ENCODE measurements at regions of chr22 and their contacts with region 1.

Region 1: DNA sequence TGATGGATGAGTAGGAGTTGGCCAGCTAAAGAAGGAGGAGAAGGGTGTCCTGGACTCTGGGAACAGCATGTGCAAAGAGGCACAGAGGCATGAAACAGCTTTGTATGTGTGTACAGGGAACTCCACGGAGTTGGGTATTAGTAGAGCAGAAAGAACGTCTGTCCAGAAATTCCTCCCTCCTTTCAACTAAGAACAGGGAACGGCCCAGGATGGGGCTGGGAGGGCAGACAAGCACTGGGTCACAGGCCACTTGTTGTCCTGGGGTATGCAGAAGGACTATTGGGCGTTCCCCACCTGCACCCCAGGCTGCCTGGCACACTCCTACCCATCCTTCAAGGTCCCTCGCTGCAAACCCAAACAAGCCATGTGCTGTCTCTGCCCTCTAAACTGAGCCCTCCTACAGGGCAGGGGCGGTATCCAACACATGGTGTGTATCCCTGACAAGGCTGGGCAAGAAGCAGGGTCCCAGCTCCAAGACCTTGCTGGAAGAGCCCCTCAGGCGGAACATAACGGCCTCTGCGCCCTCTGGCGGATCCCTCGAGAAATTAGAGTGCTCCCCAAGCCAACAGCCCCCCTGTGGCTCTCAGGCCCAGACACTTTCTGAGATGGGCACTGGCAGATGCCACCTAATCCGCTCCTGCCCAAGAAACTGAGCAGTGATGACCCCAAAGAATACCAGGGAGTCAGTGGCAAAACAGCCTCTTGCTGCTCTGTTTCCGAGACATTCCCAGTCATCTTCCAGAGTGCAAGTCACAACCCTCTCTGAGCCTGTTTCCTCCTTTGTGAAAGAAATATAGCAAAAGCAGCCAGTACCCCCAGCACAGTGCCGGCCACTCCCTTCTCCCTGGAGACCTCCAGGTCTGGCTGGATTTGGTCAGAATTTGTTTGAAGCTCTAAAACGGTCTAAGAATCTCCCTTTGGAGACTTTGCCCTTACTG is 1.6 kb upstream of the ELFN2 start:
- DNase-seq: peak; percentile 56 to 83
- H3K4me3 ChIP-seq: no peak overlapping the region
- H3K27ac ChIP-seq: no peak overlapping the region
- H3K4me1 ChIP-seq: peaks cover 0 to 24% (median 16%) of the 10 kb centered on the region in 4 experiments; a peak in 6 of 7 replicates
- H3K27me3 ChIP-seq: peaks cover 29 to 43% (median 38%) of the 10 kb centered on the region in 4 experiments
- CTCF ChIP-seq: peak; percentile 73 to 92 (median 90)
- EP300 ChIP-seq: no peak
- POLR2A ChIP-seq: no peak
- RAD21 ChIP-seq: peak; percentile 80 to 84

Region 2: DNA sequence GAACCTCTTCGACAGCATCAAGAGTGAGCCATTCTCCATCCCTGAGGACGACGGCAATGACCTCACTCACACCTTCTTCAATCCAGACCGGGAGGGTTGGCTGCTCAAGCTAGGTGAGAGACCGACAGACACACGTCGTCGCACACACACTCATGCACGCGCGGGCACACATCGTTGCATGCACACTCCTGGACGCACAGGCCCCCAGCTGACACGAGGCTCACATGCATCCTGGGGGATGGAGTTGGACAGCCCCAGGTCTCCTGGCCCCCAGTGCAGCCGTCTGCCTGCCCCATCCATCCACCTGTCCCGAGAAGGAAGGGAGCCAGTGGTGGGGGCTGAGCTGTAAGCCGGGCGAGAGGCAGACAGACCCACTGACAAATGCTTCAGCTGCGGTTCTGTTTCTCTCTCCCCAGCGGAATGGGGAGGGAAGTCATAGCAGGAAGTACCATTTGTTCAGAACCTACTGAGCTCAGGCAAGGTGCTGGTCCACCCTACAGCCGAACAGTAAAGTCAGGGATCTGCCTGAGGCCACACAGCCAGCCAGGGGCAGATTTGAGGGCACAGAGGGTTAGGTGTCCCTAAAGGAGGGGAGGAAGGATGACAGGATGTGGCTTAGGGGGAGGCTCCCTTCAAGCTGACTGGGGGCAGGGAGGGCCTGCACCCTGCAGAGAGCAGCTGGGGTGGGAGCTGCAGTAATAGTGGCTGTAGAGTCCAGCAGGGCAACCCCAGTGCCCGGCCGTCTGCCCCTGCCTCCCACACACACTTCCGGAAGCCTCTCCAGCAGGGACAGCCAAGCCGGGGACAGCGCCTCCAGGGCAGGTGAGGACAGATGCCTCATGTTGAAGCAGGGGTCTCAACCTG is 119.5 kb before region 1 on chr22:
- CTCF ChIA-PET with region 1: interaction called, 116 read pairs
- POLR2A ChIA-PET with region 1: no interaction called
- DNase-seq: no peak
- H3K4me3 ChIP-seq: no peak overlapping the region
- H3K27ac ChIP-seq: no peak overlapping the region
- H3K4me1 ChIP-seq: peaks cover 6 to 21% (median 14%) of the 10 kb centered on the region in 4 experiments
- H3K27me3 ChIP-seq: no peaks in the 10 kb centered on the region; a peak in 2 of 7 replicates
- CTCF ChIP-seq: no peak
- EP300 ChIP-seq: no peak
- POLR2A ChIP-seq: no peak
- RAD21 ChIP-seq: no peak

Region 3: GRCh38 chr22:37324340-37325038 is 104.4 kb before region 1 on chr22:
- CTCF ChIA-PET with region 1: interaction called, 56 read pairs
- POLR2A ChIA-PET with region 1: no interaction called
- DNase-seq: no peak
- H3K4me3 ChIP-seq: peak overlapping the region; percentile 10 to 53 (median 28); a peak in 7 of 8 replicates
- H3K27ac ChIP-seq: no peak overlapping the region
- H3K4me1 ChIP-seq: peaks cover 7 to 18% (median 12%) of the 10 kb centered on the region in 4 experiments
- H3K27me3 ChIP-seq: peaks cover 0 to 27% (median 17%) of the 10 kb centered on the region in 4 experiments; a peak in 6 of 7 replicates
- CTCF ChIP-seq: no peak
- EP300 ChIP-seq: no peak
- POLR2A ChIP-seq: no peak
- RAD21 ChIP-seq: no peak

Region 4: DNA sequence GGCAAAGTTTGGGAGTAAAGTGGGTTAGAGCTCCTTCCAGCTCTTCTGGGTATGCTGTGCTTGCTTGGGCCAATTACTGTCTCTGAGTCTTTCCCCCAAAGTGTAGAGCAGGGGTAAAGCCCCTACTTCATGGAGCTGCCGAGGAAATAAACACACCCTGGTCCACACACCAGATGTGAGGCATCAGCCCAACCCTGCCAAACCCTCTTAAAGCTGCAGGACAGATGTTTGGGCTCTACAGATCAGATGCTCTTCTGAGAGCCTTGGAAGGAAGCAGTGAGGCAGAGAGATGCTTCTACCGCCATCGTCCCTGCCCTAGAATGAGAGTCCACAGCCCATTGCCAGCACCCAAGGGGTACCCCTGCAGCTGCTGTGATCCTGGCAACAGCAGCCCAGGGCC is 66.3 kb before region 1 on chr22:
- CTCF ChIA-PET with region 1: interaction called, 14 read pairs
- POLR2A ChIA-PET with region 1: no interaction called
- DNase-seq: no peak
- H3K4me3 ChIP-seq: no peak overlapping the region
- H3K27ac ChIP-seq: no peak overlapping the region
- H3K4me1 ChIP-seq: no peaks in the 10 kb centered on the region; a peak in 1 of 7 replicates
- H3K27me3 ChIP-seq: peaks cover 0 to 3% (median 0%) of the 10 kb centered on the region in 4 experiments; a peak in 1 of 7 replicates
- CTCF ChIP-seq: no peak
- EP300 ChIP-seq: no peak
- POLR2A ChIP-seq: no peak
- RAD21 ChIP-seq: no peak

Region 5: DNA sequence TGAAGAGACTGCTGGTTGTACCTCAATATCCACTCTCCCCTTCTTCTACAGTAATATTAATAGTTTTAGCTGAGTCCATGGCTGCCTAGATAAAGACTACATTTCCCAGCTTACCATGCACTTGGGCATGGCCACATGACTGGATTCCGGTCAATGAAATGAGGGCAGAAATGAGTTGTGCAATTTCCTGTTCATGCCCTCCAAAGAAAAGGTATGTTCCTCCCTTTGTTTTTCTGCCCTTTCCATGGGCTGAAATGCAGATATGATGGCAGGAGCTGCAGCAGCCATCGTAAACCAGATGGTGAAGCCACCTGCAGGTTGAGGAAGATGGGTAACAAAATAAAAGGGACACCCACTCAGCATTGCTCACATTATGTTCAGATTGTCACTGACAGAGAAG is 13.6 kb after region 1 on chr22:
- CTCF ChIA-PET with region 1: interaction called, 25 read pairs
- POLR2A ChIA-PET with region 1: interaction called, 5 read pairs
- DNase-seq: no peak
- H3K4me3 ChIP-seq: no peak overlapping the region
- H3K27ac ChIP-seq: no peak overlapping the region
- H3K4me1 ChIP-seq: no peaks in the 10 kb centered on the region
- H3K27me3 ChIP-seq: no peaks in the 10 kb centered on the region; a peak in 1 of 7 replicates
- CTCF ChIP-seq: no peak
- EP300 ChIP-seq: no peak
- POLR2A ChIP-seq: no peak
- RAD21 ChIP-seq: no peak

Region 6: DNA sequence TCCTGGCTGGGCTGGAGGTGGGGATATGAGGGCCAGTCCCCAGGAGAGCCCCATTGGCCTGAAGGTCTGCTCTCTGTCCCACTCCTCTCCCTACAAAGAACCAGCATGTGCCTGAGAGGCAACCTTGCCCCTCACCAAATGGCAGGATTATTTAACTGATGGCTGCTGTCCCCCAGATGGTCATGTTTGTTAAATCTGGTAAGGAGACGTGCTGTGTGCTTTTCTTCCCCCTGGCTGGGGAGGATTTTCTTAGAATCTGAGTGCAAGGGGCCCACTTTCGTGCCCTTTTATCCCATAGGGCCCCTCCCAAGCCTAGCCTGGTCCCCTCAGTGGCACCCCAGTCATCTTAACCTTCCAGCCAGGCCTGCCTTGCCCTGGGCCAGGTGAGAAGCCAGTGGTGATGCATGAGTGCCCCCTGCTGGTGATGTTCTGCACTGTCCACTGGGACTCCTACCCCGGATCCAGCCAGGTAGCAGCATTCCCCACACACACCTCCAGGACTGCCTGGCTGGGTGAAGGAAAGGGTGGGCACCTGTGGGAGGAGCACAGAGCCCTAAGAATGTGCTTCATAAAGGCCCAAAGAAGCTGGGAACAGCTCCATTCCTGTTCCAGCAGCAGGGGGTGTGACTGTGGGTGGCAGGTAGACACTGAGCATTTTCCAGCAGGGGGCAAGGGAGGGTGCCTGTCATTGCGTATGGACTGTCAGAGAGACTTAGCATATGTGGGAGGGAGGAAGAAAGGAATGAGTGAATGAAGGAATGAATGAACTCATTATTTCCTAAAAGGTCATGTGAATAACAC is 28.4 kb after region 1 on chr22:
- CTCF ChIA-PET with region 1: interaction called, 56 read pairs
- POLR2A ChIA-PET with region 1: interaction called, 3 read pairs
- DNase-seq: peak; percentile 56 to 97
- H3K4me3 ChIP-seq: no peak overlapping the region
- H3K27ac ChIP-seq: no peak overlapping the region
- H3K4me1 ChIP-seq: no peaks in the 10 kb centered on the region; a peak in 2 of 7 replicates
- H3K27me3 ChIP-seq: no peaks in the 10 kb centered on the region
- CTCF ChIP-seq: peak; percentile 97 to 99 (median 99)
- EP300 ChIP-seq: no peak
- POLR2A ChIP-seq: no peak
- RAD21 ChIP-seq: peak; percentile 98 to 100

Region 7: GRCh38 chr22:37533995-37534394 is 105.1 kb after region 1 on chr22:
- CTCF ChIA-PET with region 1: no interaction called
- POLR2A ChIA-PET with region 1: no interaction called
- DNase-seq: no peak
- H3K4me3 ChIP-seq: no peak overlapping the region
- H3K27ac ChIP-seq: no peak overlapping the region
- H3K4me1 ChIP-seq: peaks cover 0 to 3% (median 0%) of the 10 kb centered on the region in 4 experiments; a peak in 1 of 7 replicates
- H3K27me3 ChIP-seq: no peaks in the 10 kb centered on the region
- CTCF ChIP-seq: no peak
- EP300 ChIP-seq: no peak
- POLR2A ChIP-seq: no peak
- RAD21 ChIP-seq: no peak

Measured in H1 (cell line).